ENCODE measurements at regions of chr2 and their contacts with region 1.

Region 1: GRCh38 chr2:168455648-168456520 is at the start of gene CERS6:
- DNase-seq: peak; percentile 84
- H3K4me3 Mint-ChIP-seq: no peak within 1 kb of the TSS
- H3K27ac Mint-ChIP-seq: peak within 1 kb of the TSS; percentile 60
- H3K4me1 Mint-ChIP-seq: peaks cover 33% of the 10 kb centered on the region
- H3K27me3 Mint-ChIP-seq: no peaks in the 10 kb centered on the region
- total RNA-seq, gene CERS6: 21.5 and 22.4 TPM in 2 replicates

Region 2: DNA sequence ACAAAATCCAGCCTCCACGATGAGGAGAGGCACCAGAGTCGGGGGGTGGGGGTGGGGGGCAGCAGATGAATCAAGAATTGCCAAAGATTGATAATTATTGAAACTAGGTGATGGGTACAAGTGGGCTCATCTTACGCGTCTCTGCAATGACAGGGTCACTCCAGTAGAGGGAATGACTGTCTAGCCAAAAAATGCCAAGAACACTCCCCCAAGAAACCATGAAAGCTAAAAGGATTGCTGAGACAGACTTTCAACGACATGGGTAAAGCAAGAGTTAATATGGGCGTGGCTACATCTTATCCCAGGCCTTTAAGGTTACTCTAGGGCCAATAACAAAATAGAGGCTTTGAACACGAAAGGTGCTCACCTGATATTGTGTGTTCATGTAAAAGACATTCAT is 295.0 kb before region 1 on chr2:
- intact Hi-C with region 1: loop called (anchors 10 kb)
- DNase-seq: no peak
- H3K4me3 Mint-ChIP-seq: no peak overlapping the region
- H3K27ac Mint-ChIP-seq: no peak overlapping the region
- H3K4me1 Mint-ChIP-seq: peaks cover 28% of the 10 kb centered on the region
- H3K27me3 Mint-ChIP-seq: no peaks in the 10 kb centered on the region

Region 3: DNA sequence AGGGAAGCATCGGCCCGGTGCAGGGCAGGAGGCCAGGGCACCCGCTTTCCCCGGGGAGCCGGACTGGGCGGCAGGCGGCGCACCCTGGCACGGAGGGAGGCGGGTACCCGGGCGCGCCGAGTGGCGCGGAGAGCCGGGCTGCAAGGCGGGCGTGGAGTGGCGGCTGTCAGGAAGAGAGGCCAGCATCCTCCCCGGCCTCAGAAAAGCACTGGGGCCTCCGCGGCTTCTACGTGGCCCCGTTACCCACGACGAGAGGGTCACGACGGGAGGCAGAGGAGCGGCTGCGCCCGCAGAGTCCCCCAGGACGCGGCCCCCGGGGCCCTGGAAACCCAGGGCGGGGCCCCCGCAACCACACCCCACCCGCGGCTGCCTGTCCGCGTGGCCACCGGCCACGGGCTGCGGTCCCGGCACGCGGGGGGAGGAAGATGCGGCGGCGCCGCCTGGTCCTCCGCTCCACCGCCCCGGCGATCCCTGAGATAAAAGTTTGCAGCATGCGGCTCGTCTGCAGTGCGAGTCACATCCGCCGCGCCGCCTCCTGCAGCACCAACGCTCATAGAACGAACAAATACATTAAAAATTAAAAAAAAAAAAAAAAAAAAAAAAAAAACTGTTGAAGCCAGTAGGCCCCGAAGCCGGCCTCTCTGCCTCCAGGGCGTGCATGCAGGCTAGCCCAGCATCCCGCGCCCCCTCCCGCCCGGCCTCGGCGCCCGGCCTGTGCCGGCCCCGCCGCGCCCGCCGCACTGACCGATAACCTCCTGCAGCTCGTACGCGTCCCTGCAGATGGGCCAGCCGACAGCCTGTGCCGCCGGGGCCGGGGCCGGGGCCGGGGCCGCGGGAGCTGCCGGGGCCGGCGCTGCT is 209.2 kb before region 1 on chr2:
- intact Hi-C with region 1: loop called (anchors 2 kb)
- DNase-seq: peak; percentile 83
- H3K4me3 Mint-ChIP-seq: peak overlapping the region; percentile 93
- H3K27ac Mint-ChIP-seq: peak overlapping the region; percentile 94
- H3K4me1 Mint-ChIP-seq: peaks cover 42% of the 10 kb centered on the region
- H3K27me3 Mint-ChIP-seq: no peaks in the 10 kb centered on the region

Region 4: GRCh38 chr2:168278424-168278888 is 177.4 kb before region 1 on chr2:
- intact Hi-C with region 1: no loop called
- DNase-seq: no peak
- H3K4me3 Mint-ChIP-seq: no peak overlapping the region
- H3K27ac Mint-ChIP-seq: no peak overlapping the region
- H3K4me1 Mint-ChIP-seq: no peaks in the 10 kb centered on the region
- H3K27me3 Mint-ChIP-seq: peaks cover 42% of the 10 kb centered on the region

Region 5: GRCh38 chr2:168346725-168347477 is 109.0 kb before region 1 on chr2:
- intact Hi-C with region 1: loop called (anchors 2 kb)
- DNase-seq: peak; percentile 53
- H3K4me3 Mint-ChIP-seq: peak overlapping the region; percentile 81
- H3K27ac Mint-ChIP-seq: no peak overlapping the region
- H3K4me1 Mint-ChIP-seq: peaks cover 4% of the 10 kb centered on the region
- H3K27me3 Mint-ChIP-seq: peaks cover 19% of the 10 kb centered on the region

Region 6: DNA sequence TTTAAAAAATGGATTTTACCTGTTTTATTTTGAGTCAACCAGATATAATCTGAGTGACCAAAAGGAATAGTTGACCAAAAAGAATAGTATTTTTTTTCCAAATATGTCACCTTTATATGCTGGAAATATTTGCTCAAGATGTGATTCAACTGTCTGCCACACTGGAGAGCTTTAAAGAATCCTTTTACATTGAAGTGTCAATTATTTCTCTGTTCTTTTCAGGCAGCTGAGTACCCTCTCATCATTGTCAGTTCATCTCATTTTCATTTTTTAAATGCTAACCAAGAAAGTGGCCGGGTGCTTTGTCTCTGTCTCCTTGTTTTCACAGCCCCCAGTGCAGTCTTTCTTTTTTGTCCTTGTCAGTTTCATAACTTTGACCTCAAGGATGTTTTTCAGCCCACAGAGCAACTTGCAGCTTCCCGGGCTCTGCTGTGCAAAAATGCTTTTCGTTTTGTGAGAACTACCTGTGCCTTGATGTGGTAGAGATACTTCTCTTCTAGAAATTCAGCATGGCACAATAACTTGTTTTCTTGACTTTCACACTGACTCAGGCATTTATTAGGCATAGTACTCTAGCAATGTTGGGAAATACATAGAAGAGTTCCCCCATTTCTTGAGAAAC is 23.2 kb before region 1 on chr2:
- intact Hi-C with region 1: loop called (anchors 1 kb)
- DNase-seq: peak; percentile 46
- H3K4me3 Mint-ChIP-seq: peak overlapping the region; percentile 14
- H3K27ac Mint-ChIP-seq: peak overlapping the region; percentile 84
- H3K4me1 Mint-ChIP-seq: peaks cover 35% of the 10 kb centered on the region
- H3K27me3 Mint-ChIP-seq: no peaks in the 10 kb centered on the region

Region 7: DNA sequence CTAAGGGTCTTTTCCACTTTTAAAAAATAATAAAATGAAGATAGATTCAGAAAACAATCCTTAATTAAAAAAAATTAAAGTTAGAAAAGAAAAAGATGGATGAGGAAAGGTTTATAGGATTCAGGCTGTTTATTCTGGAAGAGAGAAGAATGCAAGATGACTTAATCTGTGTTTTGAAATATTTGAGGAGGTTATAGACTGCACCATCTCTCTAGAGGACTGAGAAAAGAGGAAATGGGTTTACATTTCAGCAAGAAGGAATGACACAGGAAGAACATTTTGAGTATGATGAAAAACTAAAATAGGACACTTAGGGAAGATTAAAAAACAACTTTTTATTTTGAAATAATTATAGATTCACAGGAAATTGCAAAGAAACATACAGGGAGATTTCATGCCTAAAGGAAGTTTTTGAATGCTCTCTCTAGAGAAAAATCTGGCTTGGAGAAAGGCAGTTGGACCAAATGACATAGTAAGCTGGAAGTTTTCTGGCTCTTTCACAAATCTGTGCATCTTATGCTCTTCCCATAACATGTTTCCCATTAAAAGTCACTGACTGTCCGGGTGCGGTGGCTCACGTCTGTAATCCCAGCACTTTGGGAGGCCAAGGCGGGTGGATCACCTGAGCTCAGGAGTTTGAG is 75.2 kb after region 1 on chr2:
- intact Hi-C with region 1: loop called (anchors 10 kb)
- DNase-seq: no peak
- H3K4me3 Mint-ChIP-seq: no peak overlapping the region
- H3K27ac Mint-ChIP-seq: no peak overlapping the region
- H3K4me1 Mint-ChIP-seq: peaks cover 29% of the 10 kb centered on the region
- H3K27me3 Mint-ChIP-seq: no peaks in the 10 kb centered on the region

Measured in activated T-helper 2 cell treated with anti-CD3 and anti-CD28 coated beads, Interferon-gamma antibody, Interleukin-2, Interleukin-4, amounts not matched to agents 10 μg/mL and 5 μg/mL and 100 μg/mL, durations not matched to agents 14 hours and 24 hours and 36 hours (primary cell).